Astrocyte of the cerebellum (primary cell): ENCODE measurements at regions of chr7 and their contacts with region 1.

Region 1: DNA sequence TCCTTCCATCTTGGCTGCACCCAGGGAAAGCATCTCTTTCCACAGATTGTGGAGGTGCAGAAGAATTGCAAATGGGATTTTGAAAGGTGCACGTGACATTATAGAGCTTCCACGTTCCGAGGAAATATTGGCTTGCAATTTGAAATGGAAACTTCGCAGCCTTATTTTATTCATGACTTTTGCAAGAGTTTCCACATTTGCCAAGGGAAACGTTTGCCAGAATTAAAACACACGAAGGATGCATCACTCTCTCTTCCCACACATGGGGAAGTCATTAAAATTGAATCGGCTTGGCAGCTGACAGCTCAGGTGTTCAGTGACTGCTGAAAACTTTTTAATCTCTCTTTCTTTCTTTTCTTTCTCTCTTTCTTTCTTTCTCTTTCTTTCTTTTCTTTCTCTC is 475.4 kb upstream of the IGFBP3 start:
- DNase-seq: no peak
- H3K4me3 ChIP-seq: no peak overlapping the region
- CTCF ChIP-seq: no peak

Region 2: GRCh38 chr7:46363688-46364303 is 32.7 kb before region 1 on chr7:
- in situ Hi-C with region 1: loop called (anchors 5 kb)
- DNase-seq: no peak
- H3K4me3 ChIP-seq: no peak overlapping the region
- CTCF ChIP-seq: no peak

Region 3: DNA sequence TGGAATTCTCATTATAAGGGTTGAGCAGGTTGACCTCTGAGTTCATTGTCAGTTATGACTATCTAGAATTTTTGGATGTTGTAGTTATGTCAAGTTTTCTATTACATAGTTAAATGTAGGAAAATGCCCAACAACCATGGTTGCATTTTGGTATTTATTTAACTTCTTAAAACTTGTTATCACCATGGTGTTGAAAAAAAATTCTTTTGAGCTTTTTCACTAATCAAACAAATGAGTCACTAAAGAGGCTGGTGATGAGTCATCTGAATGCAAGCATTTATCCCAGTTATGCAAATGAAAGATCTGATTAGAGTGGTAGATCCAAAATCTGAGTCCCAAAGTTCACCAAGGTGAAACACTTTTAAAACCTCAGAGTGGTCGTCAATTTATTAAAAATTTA is 149.3 kb after region 1 on chr7:
- in situ Hi-C with region 1: no loop called
- DNase-seq: peak; percentile 66
- H3K4me3 ChIP-seq: no peak overlapping the region
- CTCF ChIP-seq: no peak

Region 4: GRCh38 chr7:47497367-47498096 is 1101.1 kb after region 1 on chr7:
- in situ Hi-C with region 1: no loop called
- DNase-seq: no peak
- H3K4me3 ChIP-seq: no peak overlapping the region
- CTCF ChIP-seq: no peak